Posterior vena cava (tissue), 2 donors: ENCODE measurements at regions of chrX and their contacts with region 1.

Region 1: DNA sequence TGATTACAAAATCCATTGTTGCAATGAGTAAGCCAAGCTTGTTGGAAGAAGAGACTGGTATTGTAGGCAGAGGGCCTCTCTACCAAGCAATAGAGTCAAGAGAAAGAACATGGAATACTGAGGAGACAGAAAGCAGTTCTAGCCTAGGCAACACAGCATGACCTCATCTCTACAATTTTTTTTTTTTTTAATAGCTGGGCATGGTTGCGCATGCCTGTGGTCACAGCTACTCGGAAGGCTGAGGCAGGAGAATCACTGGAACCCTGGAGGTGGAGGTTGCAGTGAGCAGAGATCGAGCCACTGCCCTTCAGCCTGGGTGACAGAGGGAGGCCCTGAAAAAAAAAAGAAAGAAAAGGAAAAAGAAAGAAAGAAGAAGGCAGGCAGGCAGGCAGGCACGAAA is 11.7 kb upstream of the ZBTB33 start:
- DNase-seq: no peak

Region 2: DNA sequence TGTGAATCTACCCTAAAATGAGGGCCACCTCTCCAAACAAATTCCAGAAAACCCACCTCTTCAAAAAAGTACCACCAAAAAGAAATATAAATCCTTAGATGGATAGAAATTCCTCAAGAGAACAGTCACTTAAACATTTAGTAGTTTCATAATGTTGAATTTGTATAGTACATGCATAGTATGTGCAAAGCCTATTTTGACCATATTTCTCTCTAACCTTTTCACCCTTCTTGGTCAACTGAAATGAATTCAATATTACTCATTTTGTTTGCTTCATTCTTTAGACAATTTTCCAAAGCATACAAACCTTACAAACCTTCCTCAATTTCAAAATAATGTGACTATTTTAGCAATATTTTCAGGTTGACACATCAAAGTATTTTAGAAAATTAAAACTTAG is 127.3 kb before region 1 on chrX:
- intact Hi-C with region 1: loop called in 1 of 2 experiments (anchors 10 kb)
- DNase-seq: no peak